ENCODE measurements at regions of chr12 and their contacts with region 1.

Region 1: GRCh38 chr12:67268896-67269631 is at the start of gene CAND1:
- DNase-seq: peak; percentile 98 to 99 (median 99)
- H3K4me3 ChIP-seq: peak within 1 kb of the TSS; percentile 81 to 84
- H3K4me3 Mint-ChIP-seq: peak within 1 kb of the TSS; percentile 92 to 99 (median 98)
- H3K27ac ChIP-seq: peak within 1 kb of the TSS; percentile 97
- H3K27ac Mint-ChIP-seq: peak within 1 kb of the TSS; percentile 95 to 100 (median 99)
- H3K4me1 ChIP-seq: peaks cover 45% of the 10 kb centered on the region
- H3K4me1 Mint-ChIP-seq: peaks cover 28 to 52% (median 39%) of the 10 kb centered on the region in 4 donors
- H3K27me3 ChIP-seq: no peaks in the 10 kb centered on the region
- H3K27me3 Mint-ChIP-seq: no peaks in the 10 kb centered on the region
- total RNA-seq, gene CAND1: 124 TPM

Region 2: GRCh38 chr12:66130277-66131066 is 1138.6 kb before region 1 on chr12 and contains the start of gene LLPH:
- CTCF ChIA-PET with region 1: no interaction called
- POLR2A ChIA-PET with region 1: no interaction called
- intact Hi-C with region 1: loop called (anchors 2 kb)
- DNase-seq: peak; percentile 84 to 93 (median 86)
- H3K4me3 ChIP-seq: peak within 1 kb of the TSS; percentile 72 to 86
- H3K4me3 Mint-ChIP-seq: peak within 1 kb of the TSS; percentile 92 to 99 (median 96)
- H3K27ac ChIP-seq: peak within 1 kb of the TSS; percentile 83
- H3K27ac Mint-ChIP-seq: peak within 1 kb of the TSS; percentile 93 to 99 (median 98)
- H3K4me1 ChIP-seq: peaks cover 37% of the 10 kb centered on the region
- H3K4me1 Mint-ChIP-seq: peaks cover 40 to 61% (median 45%) of the 10 kb centered on the region in 4 donors
- H3K27me3 ChIP-seq: no peaks in the 10 kb centered on the region
- H3K27me3 Mint-ChIP-seq: no peaks in the 10 kb centered on the region
- total RNA-seq, gene LLPH: 25.8 to 26.4 TPM

Region 3: DNA sequence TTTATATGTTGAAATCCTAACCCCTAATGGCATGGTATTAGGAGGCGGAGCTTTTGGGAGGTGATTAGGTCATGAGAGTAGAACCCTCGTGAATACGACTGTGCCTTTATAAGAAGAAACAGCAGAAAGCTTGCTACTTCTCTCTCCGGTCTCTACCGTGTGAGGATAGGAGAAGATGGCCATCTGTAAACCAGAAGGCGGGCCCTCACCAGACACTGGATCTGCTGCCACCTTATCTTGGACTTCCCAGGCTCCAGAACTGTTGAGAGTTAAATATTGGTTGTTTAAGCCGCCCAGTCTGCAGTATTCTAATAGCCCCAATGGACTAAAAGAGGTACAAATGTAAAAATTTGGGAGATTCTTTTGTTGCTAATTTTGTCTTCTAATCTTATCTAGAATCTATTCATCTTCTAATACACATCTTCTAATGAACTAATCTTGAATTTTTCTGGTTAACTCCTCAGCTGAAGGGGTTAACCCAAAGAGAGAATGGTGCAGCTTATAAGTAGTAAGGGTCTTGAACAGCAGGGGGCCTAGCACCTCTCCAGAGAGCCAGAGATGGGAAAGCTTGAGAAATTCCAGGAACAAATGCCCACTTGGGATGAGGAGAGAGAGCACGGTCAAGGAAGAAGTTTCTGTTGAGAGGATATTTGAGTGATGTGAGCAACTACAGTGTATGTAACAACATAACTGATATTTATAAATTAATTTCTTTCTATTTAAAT is 326.2 kb before region 1 on chr12:
- CTCF ChIA-PET with region 1: no interaction called
- POLR2A ChIA-PET with region 1: no interaction called
- intact Hi-C with region 1: no loop called
- DNase-seq: no peak
- H3K4me3 ChIP-seq: no peak overlapping the region
- H3K4me3 Mint-ChIP-seq: no peak overlapping the region
- H3K27ac ChIP-seq: no peak overlapping the region
- H3K27ac Mint-ChIP-seq: no peak overlapping the region
- H3K4me1 ChIP-seq: no peaks in the 10 kb centered on the region
- H3K4me1 Mint-ChIP-seq: peaks cover 2 to 7% (median 6%) of the 10 kb centered on the region in 4 donors
- H3K27me3 ChIP-seq: no peaks in the 10 kb centered on the region
- H3K27me3 Mint-ChIP-seq: no peaks in the 10 kb centered on the region

Region 4: GRCh38 chr12:67068761-67069450 is 200.2 kb before region 1 on chr12:
- CTCF ChIA-PET with region 1: no interaction called
- POLR2A ChIA-PET with region 1: no interaction called
- intact Hi-C with region 1: loop called (anchors 5 kb)
- DNase-seq: peak; percentile 17 to 44 (median 33)
- H3K4me3 ChIP-seq: no peak overlapping the region
- H3K4me3 Mint-ChIP-seq: peak overlapping the region; percentile 88 to 94 (median 91)
- H3K27ac ChIP-seq: no peak overlapping the region
- H3K27ac Mint-ChIP-seq: peak overlapping the region in 5 of 7 donors; percentile 42 to 86 (median 65)
- H3K4me1 ChIP-seq: peaks cover 14% of the 10 kb centered on the region
- H3K4me1 Mint-ChIP-seq: peaks cover 13 to 24% (median 17%) of the 10 kb centered on the region in 4 donors
- H3K27me3 ChIP-seq: peaks cover 5% of the 10 kb centered on the region
- H3K27me3 Mint-ChIP-seq: peaks cover 19 to 23% of the 10 kb centered on the region in 2 donors

Region 5: DNA sequence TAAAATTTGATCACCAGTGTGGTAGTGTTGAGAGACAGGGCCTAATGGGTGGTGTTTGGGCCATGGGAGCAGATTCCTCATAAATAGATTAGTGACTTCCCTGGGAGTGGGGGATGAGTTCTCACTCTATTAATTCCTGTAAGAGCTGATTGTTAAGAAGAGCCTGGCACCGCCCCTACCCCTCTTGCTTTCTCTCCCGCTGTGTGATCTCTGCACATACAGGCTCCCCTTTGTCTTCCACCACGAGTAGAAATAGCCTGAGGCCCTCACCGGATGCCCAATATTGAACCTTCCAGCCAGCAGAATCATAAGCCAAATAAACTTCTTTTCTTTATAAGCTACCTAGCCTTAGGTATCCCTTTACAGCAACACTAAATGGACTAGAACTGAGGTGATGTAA is 31.8 kb before region 1 on chr12:
- CTCF ChIA-PET with region 1: no interaction called
- POLR2A ChIA-PET with region 1: no interaction called
- intact Hi-C with region 1: no loop called
- DNase-seq: no peak
- H3K4me3 ChIP-seq: no peak overlapping the region
- H3K4me3 Mint-ChIP-seq: no peak overlapping the region
- H3K27ac ChIP-seq: no peak overlapping the region
- H3K27ac Mint-ChIP-seq: no peak overlapping the region
- H3K4me1 ChIP-seq: no peaks in the 10 kb centered on the region
- H3K4me1 Mint-ChIP-seq: no peaks in the 10 kb centered on the region
- H3K27me3 ChIP-seq: no peaks in the 10 kb centered on the region
- H3K27me3 Mint-ChIP-seq: peaks cover 5 to 10% of the 10 kb centered on the region in 2 donors

Region 6: GRCh38 chr12:67280572-67280971 is 11.5 kb after region 1 on chr12:
- CTCF ChIA-PET with region 1: interaction called, 5 read pairs
- POLR2A ChIA-PET with region 1: interaction called, 22 read pairs
- intact Hi-C with region 1: no loop called
- DNase-seq: no peak
- H3K4me3 ChIP-seq: no peak overlapping the region
- H3K4me3 Mint-ChIP-seq: peak overlapping the region in 1 of 8 donors; percentile 23
- H3K27ac ChIP-seq: no peak overlapping the region
- H3K27ac Mint-ChIP-seq: peak overlapping the region in 2 of 7 donors; percentile 29 to 48
- H3K4me1 ChIP-seq: peaks cover 51% of the 10 kb centered on the region
- H3K4me1 Mint-ChIP-seq: peaks cover 53 to 68% (median 63%) of the 10 kb centered on the region in 4 donors
- H3K27me3 ChIP-seq: no peaks in the 10 kb centered on the region
- H3K27me3 Mint-ChIP-seq: no peaks in the 10 kb centered on the region

Region 7: GRCh38 chr12:67630373-67631088 is 361.5 kb after region 1 on chr12:
- CTCF ChIA-PET with region 1: no interaction called
- POLR2A ChIA-PET with region 1: interaction called, 7 read pairs
- intact Hi-C with region 1: loop called (anchors 10 kb)
- DNase-seq: peak; percentile 91 to 96 (median 92)
- H3K4me3 ChIP-seq: no peak overlapping the region
- H3K4me3 Mint-ChIP-seq: peak overlapping the region; percentile 61 to 88 (median 74)
- H3K27ac ChIP-seq: peak overlapping the region; percentile 43
- H3K27ac Mint-ChIP-seq: peak overlapping the region; percentile 87 to 96 (median 91)
- H3K4me1 ChIP-seq: peaks cover 84% of the 10 kb centered on the region
- H3K4me1 Mint-ChIP-seq: peaks cover 67 to 91% (median 82%) of the 10 kb centered on the region in 4 donors
- H3K27me3 ChIP-seq: no peaks in the 10 kb centered on the region
- H3K27me3 Mint-ChIP-seq: no peaks in the 10 kb centered on the region

Region 8: DNA sequence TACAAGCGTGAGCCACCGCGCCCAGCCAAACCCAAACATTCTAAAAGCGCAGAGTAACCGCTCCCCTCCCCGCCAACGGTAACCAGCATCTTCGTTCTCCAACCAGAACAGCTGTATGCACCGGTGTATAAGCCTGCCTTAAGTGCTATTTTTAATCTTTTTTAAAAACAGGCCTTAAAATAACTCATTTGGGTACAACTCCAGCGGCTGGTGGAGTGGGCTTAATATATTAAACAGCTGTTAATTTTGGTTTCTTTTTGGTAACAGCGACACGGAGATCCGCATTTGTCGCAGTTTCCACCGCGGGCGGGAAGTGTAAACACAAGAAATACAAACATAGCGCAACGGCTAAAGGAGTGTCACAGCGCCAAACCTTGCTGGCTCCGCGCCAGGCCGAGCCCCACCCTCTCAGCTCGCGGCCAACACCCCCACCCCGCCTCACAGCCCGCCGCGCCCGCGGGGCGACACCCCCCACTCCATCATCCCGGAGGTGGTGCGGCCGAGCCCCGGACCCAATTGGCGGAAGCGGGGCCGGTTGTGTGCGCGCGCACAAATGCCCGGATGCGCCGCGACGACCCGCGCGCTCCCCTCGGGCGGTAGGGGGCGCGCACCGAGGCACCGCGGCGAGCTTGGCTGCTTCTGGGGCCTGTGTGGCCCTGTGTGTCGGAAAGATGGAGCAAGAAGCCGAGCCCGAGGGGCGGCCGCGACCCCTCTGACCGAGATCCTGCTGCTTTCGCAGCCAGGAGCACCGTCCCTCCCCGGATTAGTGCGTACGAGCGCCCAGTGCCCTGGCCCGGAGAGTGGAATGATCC is 1538.7 kb after region 1 on chr12 and contains the start of gene MDM2:
- CTCF ChIA-PET with region 1: interaction called, 3 read pairs
- POLR2A ChIA-PET with region 1: interaction called, 19 read pairs
- intact Hi-C with region 1: loop called (anchors 1 kb)
- DNase-seq: peak; percentile 97 to 99 (median 99)
- H3K4me3 ChIP-seq: peak within 1 kb of the TSS; percentile 42 to 94
- H3K4me3 Mint-ChIP-seq: peak within 1 kb of the TSS; percentile 95 to 97 (median 96)
- H3K27ac ChIP-seq: peak within 1 kb of the TSS; percentile 92
- H3K27ac Mint-ChIP-seq: peak within 1 kb of the TSS; percentile 98 to 99 (median 99)
- H3K4me1 ChIP-seq: peaks cover 28% of the 10 kb centered on the region
- H3K4me1 Mint-ChIP-seq: peaks cover 9 to 33% (median 22%) of the 10 kb centered on the region in 4 donors
- H3K27me3 ChIP-seq: no peaks in the 10 kb centered on the region
- H3K27me3 Mint-ChIP-seq: no peaks in the 10 kb centered on the region
- total RNA-seq, gene MDM2: 117 to 121 TPM

Region 9: DNA sequence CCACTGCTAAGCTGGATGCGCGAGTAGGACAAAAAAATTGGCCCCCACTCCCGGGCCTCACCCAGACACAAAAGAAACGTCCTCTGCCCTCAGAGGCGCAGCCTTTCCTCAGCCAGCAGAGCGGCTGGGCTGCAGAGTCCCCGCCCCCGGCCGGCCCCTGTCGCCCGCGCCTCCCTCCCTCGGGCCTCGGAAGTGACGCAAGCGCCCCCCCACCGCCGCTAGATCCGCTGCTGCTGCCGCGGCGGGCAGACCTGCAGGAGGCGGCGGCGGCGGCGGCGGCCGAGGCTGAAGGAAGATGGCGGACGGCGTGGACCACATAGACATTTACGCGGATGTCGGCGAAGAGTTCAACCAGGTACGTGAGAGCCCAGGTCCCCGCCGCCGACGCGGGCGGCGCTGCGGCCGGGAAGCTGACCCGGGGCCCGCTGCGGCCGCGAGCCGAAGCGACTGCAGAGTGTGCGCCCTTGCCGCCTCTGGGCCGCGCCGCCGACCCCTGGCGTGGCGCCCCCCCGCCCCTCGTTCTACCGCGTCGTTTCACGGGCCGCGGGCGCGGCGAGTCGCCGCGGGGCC is 1970.4 kb after region 1 on chr12 and contains the start of gene CPSF6:
- CTCF ChIA-PET with region 1: no interaction called
- POLR2A ChIA-PET with region 1: no interaction called
- intact Hi-C with region 1: loop called (anchors 2 kb)
- DNase-seq: peak; percentile 95 to 96 (median 95)
- H3K4me3 ChIP-seq: peak within 1 kb of the TSS; percentile 60 to 94
- H3K4me3 Mint-ChIP-seq: peak within 1 kb of the TSS; percentile 96 to 100 (median 98)
- H3K27ac ChIP-seq: peak within 1 kb of the TSS; percentile 89
- H3K27ac Mint-ChIP-seq: peak within 1 kb of the TSS; percentile 98 to 100 (median 99)
- H3K4me1 ChIP-seq: peaks cover 52% of the 10 kb centered on the region
- H3K4me1 Mint-ChIP-seq: peaks cover 36 to 57% (median 47%) of the 10 kb centered on the region in 4 donors
- H3K27me3 ChIP-seq: no peaks in the 10 kb centered on the region
- H3K27me3 Mint-ChIP-seq: no peaks in the 10 kb centered on the region
- total RNA-seq, gene CPSF6: 109 to 120 TPM

Measured in CD4-positive, alpha-beta memory T cell (primary cell).